Activated CD8-positive, alpha-beta T cell treated with anti-CD3 and anti-CD28 coated beads for 36 hours (primary cell): ENCODE measurements at regions of chr12 and their contacts with region 1.

Region 1: DNA sequence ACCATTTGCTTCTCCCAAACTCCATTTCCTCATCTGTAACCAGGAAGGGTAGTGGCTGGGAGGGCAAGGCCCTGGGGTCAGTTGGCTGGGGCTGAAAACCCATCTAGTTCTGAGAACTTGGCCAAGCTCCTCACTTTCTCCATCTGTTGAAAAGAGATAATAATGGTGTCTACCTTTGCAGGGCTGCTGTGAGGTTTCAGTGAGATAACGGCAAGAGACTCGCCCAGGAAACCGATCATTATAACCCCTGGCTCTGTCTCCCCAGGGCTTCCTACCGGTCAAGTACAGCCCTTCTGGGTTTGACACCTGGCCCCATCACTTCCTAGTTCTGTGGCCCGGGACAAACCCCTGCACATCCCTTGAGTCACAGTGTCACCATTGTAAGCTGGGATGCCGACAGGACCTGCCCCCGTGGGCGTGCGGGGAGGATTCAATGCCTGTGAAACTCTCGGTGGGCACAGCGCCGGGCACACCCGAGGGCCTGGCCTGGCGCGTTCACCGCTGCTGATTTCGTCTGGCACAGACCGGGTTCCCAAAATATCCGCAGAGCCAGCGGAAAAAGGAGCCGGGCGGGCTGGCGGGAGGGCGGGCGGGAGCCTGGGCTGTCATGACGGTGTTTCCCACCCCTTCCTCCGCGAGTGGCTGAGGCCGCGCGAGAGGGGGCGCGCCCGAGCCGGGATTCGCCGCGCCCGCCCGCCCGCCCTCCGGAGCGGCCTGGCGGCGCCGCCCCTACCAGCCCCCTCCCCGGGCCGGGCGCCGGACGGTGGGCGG is 4.4 kb downstream of the KMT5A start:
- DNase-seq: peak; percentile 85
- ATAC-seq: peak; percentile 44
- H3K4me3 Mint-ChIP-seq: peak overlapping the region; percentile 77
- H3K27ac Mint-ChIP-seq: peak overlapping the region; percentile 85
- H3K4me1 Mint-ChIP-seq: peaks cover 35% of the 10 kb centered on the region
- H3K27me3 Mint-ChIP-seq: no peaks in the 10 kb centered on the region
- CTCF ChIP-seq: no peak

Region 2: DNA sequence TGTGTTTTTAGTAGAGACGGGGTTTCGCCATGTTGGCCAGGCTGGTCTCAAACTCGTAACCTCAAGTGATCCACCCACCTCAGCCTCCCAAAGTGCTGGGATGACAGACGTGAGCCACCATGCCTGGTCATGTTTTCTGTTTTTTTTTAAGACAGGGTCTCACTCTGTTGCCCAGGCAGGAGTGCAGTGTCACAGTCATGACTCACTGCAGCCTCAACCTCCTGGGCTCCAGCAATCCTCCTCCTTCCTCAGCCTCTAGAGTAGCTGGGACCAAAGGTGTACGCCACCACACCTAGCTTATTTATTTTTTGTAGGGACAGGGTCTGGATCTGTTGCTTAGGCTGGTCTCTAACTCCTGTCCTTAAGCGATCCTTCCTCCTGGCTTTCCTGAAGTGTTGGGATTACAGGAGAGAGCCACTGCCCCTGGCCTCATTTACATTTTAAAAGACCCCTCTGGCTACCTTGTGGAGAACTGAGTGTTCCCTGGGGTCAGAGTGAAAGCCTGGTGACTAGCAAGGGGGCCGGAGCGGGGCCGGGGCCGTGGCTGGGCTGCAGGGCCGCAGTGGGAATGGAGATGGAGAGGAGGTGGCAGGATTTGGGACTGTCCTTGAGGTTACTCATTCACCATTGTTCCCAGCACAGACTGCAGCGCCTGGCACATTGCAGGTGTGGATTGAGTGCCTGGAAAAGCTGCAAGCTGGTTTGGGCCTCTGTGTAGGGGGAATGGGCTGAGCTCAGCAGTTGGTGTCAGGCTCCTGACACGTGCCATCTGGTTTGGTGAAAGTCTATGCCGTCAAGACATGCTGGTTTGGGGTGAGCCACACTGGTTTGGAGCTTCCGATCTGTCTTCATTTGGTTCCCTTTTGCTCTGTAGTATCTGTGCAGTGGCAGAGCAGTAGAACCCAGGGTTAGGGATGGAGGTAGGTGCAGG is 13.7 kb after region 1 on chr12:
- CTCF ChIA-PET with region 1: no interaction called
- POLR2A ChIA-PET with region 1: no interaction called
- intact Hi-C with region 1: no loop called
- DNase-seq: no peak
- ATAC-seq: no peak
- H3K4me3 Mint-ChIP-seq: no peak overlapping the region
- H3K27ac Mint-ChIP-seq: no peak overlapping the region
- H3K4me1 Mint-ChIP-seq: peaks cover 2% of the 10 kb centered on the region
- H3K27me3 Mint-ChIP-seq: no peaks in the 10 kb centered on the region
- CTCF ChIP-seq: no peak

Region 3: GRCh38 chr12:123580772-123581171 is 192.4 kb after region 1 on chr12:
- CTCF ChIA-PET with region 1: interaction called, 11 read pairs
- POLR2A ChIA-PET with region 1: interaction called, 3 read pairs
- intact Hi-C with region 1: no loop called
- DNase-seq: no peak
- ATAC-seq: no peak
- H3K4me3 Mint-ChIP-seq: no peak overlapping the region
- H3K27ac Mint-ChIP-seq: no peak overlapping the region
- H3K4me1 Mint-ChIP-seq: peaks cover 18% of the 10 kb centered on the region
- H3K27me3 Mint-ChIP-seq: no peaks in the 10 kb centered on the region
- CTCF ChIP-seq: no peak